Activated T-helper 1 cell treated with anti-CD3 and anti-CD28 coated beads, Interleukin-12 subunit alpha, Interleukin-12 subunit beta, Interleukin-2, Interleukin-4 antibody, amounts not matched to agents 30 ng/mL and 10 ng/mL and 1 ng/mL, durations not matched to agents 14 hours and 24 hours and 36 hours (primary cell): ENCODE measurements at regions of chr1 and their contacts with region 1.

Region 1: GRCh38 chr1:219247441-219247840 is 73.8 kb downstream of the LYPLAL1 start:
- DNase-seq: no peak
- H3K4me3 Mint-ChIP-seq: no peak overlapping the region
- H3K27ac Mint-ChIP-seq: no peak overlapping the region
- H3K4me1 Mint-ChIP-seq: no peaks in the 10 kb centered on the region
- H3K27me3 Mint-ChIP-seq: no peaks in the 10 kb centered on the region

Region 2: GRCh38 chr1:219215477-219215876 is 32.0 kb before region 1 on chr1:
- intact Hi-C with region 1: no loop called
- DNase-seq: no peak
- H3K4me3 Mint-ChIP-seq: no peak overlapping the region
- H3K27ac Mint-ChIP-seq: no peak overlapping the region
- H3K4me1 Mint-ChIP-seq: no peaks in the 10 kb centered on the region
- H3K27me3 Mint-ChIP-seq: no peaks in the 10 kb centered on the region

Region 3: DNA sequence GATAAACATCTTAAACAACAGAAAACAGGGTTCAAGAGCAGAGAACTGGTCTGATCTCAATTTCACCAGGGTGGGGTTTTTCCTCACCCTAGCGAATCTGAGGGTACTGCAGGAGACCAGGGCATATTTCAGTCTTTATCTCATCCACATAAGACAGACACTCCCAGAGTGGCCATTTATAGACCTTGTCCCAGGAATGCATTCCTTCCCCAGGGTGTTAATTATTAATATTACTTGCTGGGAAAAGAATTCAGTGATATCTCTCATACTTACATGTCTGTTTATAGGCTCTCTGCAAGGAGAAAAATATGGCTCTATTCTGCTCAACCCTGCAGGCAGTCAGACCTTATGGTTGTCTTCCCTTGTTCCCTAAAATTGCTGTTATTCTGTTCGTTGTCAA is 10.3 kb after region 1 on chr1:
- intact Hi-C with region 1: no loop called
- DNase-seq: no peak
- H3K4me3 Mint-ChIP-seq: no peak overlapping the region
- H3K27ac Mint-ChIP-seq: no peak overlapping the region
- H3K4me1 Mint-ChIP-seq: no peaks in the 10 kb centered on the region
- H3K27me3 Mint-ChIP-seq: no peaks in the 10 kb centered on the region

Region 4: GRCh38 chr1:219283541-219283940 is 36.1 kb after region 1 on chr1:
- intact Hi-C with region 1: loop called (anchors 1 kb)
- DNase-seq: no peak
- H3K4me3 Mint-ChIP-seq: no peak overlapping the region
- H3K27ac Mint-ChIP-seq: no peak overlapping the region
- H3K4me1 Mint-ChIP-seq: no peaks in the 10 kb centered on the region
- H3K27me3 Mint-ChIP-seq: no peaks in the 10 kb centered on the region